CD8-positive, alpha-beta T cell (primary cell): ENCODE measurements at regions of chr6 and their contacts with region 1.

Region 1: DNA sequence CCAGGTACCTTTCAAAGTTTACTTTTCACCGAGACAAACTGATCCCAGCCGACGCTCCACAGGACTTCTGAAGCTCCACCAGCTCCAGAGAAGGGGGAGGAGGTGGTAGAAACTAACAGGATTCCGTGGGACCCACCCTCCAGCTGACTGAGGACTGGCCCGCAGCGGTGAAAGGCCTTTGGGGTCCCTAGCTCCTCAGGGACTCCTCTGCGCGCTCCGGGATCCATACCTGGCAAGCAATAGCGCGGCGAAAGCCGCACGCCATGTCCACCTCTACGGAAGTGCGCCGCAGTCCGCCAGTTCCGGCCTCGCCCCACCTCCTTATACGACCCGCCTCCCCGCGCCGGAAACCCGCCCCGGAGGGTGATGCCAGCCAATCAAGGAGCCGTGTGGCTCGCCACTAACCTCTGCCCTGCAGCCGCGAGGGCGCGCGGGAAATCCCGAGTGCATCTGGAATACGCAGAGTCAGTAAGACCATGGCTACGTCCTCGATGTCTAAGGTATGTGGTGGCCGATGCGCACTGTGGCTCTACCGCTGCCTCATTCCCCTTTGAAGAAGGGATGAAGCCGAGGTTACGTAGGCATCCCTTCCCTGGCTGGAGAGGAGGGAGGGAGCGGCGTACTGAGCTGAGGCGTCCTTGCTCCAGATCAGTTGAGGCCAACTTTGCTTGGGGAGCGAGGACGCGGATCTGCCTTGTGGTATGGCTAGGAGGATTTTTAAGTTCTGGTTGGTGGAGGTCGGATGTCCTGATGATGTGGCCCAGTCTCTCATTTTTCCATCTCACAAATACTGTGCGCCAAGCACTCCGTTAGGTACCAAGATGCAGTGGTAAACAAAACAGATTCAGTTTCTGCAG is at the starts of genes ORC3 and RARS2:
- DNase-seq: peak; percentile 85 to 96 (median 93)
- ATAC-seq: peak; percentile 98
- H3K4me3 ChIP-seq: peak within 1 kb of the TSS; percentile 69 to 89
- H3K4me3 Mint-ChIP-seq: peak within 1 kb of the TSS; percentile 93
- H3K27ac ChIP-seq: peak within 1 kb of the TSS; percentile 60 to 78
- H3K27ac Mint-ChIP-seq: peak within 1 kb of the TSS; percentile 92
- H3K4me1 ChIP-seq: peaks cover 35% of the 10 kb centered on the region
- H3K4me1 Mint-ChIP-seq: peaks cover 64% of the 10 kb centered on the region
- H3K27me3 ChIP-seq: no peaks in the 10 kb centered on the region
- H3K27me3 Mint-ChIP-seq: no peaks in the 10 kb centered on the region
- CTCF ChIP-seq: no peak
- total RNA-seq, gene ORC3: 9.4 to 9.9 TPM
- total RNA-seq, gene RARS2: 15.8 to 20.4 TPM

Region 2: DNA sequence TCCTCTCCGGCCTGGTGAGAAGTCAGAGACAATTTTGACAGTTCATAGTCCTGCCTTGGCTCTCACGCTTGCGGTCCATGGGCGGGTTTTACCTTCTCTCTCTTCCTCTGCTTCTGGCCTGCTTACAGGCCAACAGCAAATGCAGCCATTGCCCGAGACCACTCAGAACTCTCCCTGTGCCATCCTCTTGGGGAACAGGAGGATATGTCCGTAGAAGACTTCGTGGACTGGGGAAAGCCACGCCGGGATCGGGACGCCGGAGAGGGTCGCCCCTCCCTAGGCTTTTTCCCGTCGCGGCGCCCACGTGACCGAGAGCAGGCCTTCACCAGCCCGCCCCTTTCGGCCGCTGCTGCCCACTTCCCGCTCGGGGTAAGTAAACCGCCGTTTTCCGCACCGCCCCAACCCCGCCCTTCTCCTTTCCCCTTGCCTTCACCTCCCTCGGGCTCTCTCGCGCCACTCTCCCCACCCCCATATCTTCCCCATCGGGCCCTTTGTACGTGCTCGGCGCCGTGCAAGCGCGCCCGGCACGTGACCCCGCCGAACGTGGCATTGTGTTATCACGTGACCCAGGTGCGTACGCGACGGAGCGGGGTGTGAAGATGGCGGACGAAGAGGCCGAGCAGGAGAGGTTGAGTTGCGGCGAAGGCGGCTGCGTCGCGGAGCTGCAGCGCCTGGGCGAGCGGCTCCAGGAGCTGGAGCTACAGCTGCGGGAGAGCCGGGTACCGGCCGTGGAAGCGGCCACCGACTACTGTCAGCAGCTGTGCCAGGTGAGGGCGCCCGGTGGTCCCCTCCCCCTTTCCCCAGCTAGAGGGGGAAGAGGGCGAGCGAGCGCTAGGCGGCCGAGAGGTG is 434.7 kb before region 1 on chr6 and contains the start of gene ZNF292:
- CTCF ChIA-PET with region 1: no interaction called
- POLR2A ChIA-PET with region 1: no interaction called
- intact Hi-C with region 1: loop called (anchors 2 to 5 kb)
- DNase-seq: peak; percentile 85 to 98 (median 95)
- ATAC-seq: peak; percentile 67
- H3K4me3 ChIP-seq: peak within 1 kb of the TSS; percentile 73 to 80
- H3K4me3 Mint-ChIP-seq: peak within 1 kb of the TSS; percentile 96
- H3K27ac ChIP-seq: peak within 1 kb of the TSS; percentile 85 to 95
- H3K27ac Mint-ChIP-seq: peak within 1 kb of the TSS; percentile 98
- H3K4me1 ChIP-seq: peaks cover 54% of the 10 kb centered on the region
- H3K4me1 Mint-ChIP-seq: peaks cover 58% of the 10 kb centered on the region
- H3K27me3 ChIP-seq: no peaks in the 10 kb centered on the region
- H3K27me3 Mint-ChIP-seq: no peaks in the 10 kb centered on the region
- CTCF ChIP-seq: no peak
- total RNA-seq, gene ZNF292: 82.6 to 87.6 TPM

Region 3: GRCh38 chr6:87322304-87323212 is 267.4 kb before region 1 on chr6 and contains the start of gene SMIM8:
- CTCF ChIA-PET with region 1: no interaction called
- POLR2A ChIA-PET with region 1: no interaction called
- intact Hi-C with region 1: loop called in 1 of 2 experiments (anchors 5 kb)
- DNase-seq: peak; percentile 66 to 90 (median 86)
- ATAC-seq: peak; percentile 99
- H3K4me3 ChIP-seq: peak within 1 kb of the TSS; percentile 72 to 86
- H3K4me3 Mint-ChIP-seq: peak within 1 kb of the TSS; percentile 94
- H3K27ac ChIP-seq: peak within 1 kb of the TSS; percentile 52 to 58
- H3K27ac Mint-ChIP-seq: peak within 1 kb of the TSS; percentile 90
- H3K4me1 ChIP-seq: peaks cover 6% of the 10 kb centered on the region
- H3K4me1 Mint-ChIP-seq: peaks cover 25% of the 10 kb centered on the region
- H3K27me3 ChIP-seq: no peaks in the 10 kb centered on the region
- H3K27me3 Mint-ChIP-seq: no peaks in the 10 kb centered on the region
- CTCF ChIP-seq: peak; percentile 99
- total RNA-seq, gene SMIM8: 4.2 TPM

Region 4: GRCh38 chr6:87393022-87393622 is 196.8 kb before region 1 on chr6:
- CTCF ChIA-PET with region 1: no interaction called
- POLR2A ChIA-PET with region 1: no interaction called
- intact Hi-C with region 1: loop called in 1 of 2 experiments (anchors 5 kb)
- DNase-seq: peak in 7 of 9 experiments; percentile 8 to 79 (median 29)
- ATAC-seq: peak; percentile 99
- H3K4me3 ChIP-seq: no peak overlapping the region
- H3K4me3 Mint-ChIP-seq: no peak overlapping the region
- H3K27ac ChIP-seq: no peak overlapping the region
- H3K27ac Mint-ChIP-seq: no peak overlapping the region
- H3K4me1 ChIP-seq: no peaks in the 10 kb centered on the region
- H3K4me1 Mint-ChIP-seq: peaks cover 3% of the 10 kb centered on the region
- H3K27me3 ChIP-seq: no peaks in the 10 kb centered on the region
- H3K27me3 Mint-ChIP-seq: no peaks in the 10 kb centered on the region
- CTCF ChIP-seq: peak; percentile 72